ENCODE measurements at regions of chr20 and their contacts with region 1.

Region 1: GRCh38 chr20:50588034-50588611 is 77.9 kb downstream of the PTPN1 start:
- DNase-seq: peak; percentile 32
- H3K4me3 ChIP-seq: no peak overlapping the region
- CTCF ChIP-seq: peak; percentile 99

Region 2: GRCh38 chr20:50484276-50484976 is 103.7 kb before region 1 on chr20:
- in situ Hi-C with region 1: loop called (anchors 5 kb)
- DNase-seq: no peak
- H3K4me3 ChIP-seq: no peak overlapping the region
- CTCF ChIP-seq: no peak

Measured in astrocyte of the cerebellum (primary cell).